ENCODE measurements at regions of chr22 and their contacts with region 1.

Region 1: GRCh38 chr22:20550821-20551744 is 43.7 kb downstream of the MED15 start:
- DNase-seq: peak; percentile 82
- ATAC-seq: peak; percentile 79
- H3K4me3 ChIP-seq: no peak overlapping the region
- H3K27ac ChIP-seq: peak overlapping the region; percentile 71 to 92
- H3K4me1 ChIP-seq: peaks cover 3 to 4% of the 10 kb centered on the region in 2 donors
- H3K27me3 ChIP-seq: no peaks in the 10 kb centered on the region

Region 2: GRCh38 chr22:20507253-20508066 is 43.6 kb before region 1 on chr22 and contains the start of gene MED15:
- intact Hi-C with region 1: loop called (anchors 5 to 10 kb)
- DNase-seq: peak; percentile 95 to 96
- ATAC-seq: peak; percentile 95
- H3K4me3 ChIP-seq: peak within 1 kb of the TSS; percentile 47 to 79
- H3K27ac ChIP-seq: peak within 1 kb of the TSS; percentile 53 to 95
- H3K4me1 ChIP-seq: peaks cover 3 to 5% of the 10 kb centered on the region in 2 donors
- H3K27me3 ChIP-seq: no peaks in the 10 kb centered on the region
- total RNA-seq, gene MED15: 93.7 to 119 TPM

Region 3: DNA sequence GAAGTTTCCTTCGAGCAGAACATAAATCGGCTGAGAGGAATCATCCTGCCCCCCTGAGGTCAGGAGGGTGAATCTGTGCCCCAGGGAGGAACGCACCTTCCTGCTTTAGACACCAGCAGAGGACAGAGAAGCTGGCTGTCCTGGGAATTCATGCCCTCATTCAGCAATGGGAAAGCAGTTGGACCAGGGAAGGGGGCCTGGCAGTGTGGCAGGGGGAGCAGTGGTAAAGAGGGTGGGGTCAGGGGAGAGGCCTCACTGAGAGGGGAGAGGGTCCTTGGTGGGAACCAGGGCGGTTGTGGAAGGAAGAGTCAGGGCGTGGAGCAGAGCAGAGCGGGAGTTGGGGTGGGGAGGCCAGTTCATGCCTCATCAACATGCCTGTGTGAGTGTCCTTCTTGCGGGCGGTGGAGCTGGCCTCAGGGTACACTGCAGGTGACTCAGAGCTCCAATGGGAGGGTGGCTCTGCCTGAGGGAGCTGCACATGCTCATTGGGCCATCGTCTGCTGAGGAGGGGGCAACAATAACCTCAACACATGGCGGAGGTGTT is 20.6 kb before region 1 on chr22:
- intact Hi-C with region 1: loop called in 1 of 2 experiments (anchors 1 kb)
- DNase-seq: no peak
- ATAC-seq: no peak
- H3K4me3 ChIP-seq: no peak overlapping the region
- H3K27ac ChIP-seq: peak overlapping the region; percentile 53 to 87
- H3K4me1 ChIP-seq: no peaks in the 10 kb centered on the region
- H3K27me3 ChIP-seq: no peaks in the 10 kb centered on the region